ENCODE measurements at regions of chr17 and their contacts with region 1.

Region 1: DNA sequence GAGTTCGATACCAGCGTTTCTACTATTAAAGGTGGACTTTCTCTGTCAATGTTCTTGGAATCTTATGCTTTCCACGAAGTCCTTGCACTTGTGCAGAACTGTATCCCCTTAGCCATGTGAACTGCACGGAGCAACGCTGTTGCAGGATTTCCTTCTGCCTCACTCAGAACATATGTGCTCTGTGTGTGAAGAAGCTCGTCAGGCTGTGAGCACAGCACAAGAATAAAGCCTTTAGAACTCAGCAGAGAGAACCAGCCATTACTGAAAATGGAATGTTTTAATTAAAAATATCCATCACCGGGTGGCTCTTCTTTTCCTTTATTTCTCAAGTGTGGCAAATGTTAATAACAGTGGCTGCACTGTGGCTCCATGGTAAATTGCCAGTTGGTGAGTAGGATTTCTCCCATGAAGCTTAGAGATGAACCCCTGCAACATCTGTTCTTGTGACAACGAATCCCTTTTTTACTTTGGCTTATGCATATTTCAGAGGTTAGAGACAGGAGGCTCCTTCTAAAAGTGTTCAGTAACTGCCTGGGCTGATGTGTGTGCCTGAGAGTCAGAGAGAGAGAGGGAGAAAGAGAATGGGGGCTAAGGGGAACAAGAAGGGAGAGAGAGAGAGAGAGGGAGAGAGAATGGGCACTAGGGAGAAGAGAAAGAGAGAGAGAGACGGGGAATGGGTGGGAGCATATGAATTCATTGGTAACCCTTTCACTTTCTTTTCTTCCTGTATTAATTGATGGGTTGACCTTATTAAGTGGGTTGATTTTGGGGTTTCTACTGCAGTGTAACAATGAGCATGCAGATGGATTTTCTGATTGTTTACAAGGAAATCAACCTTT is 50.0 kb downstream of the RPTOR start:
- DNase-seq: no peak
- CTCF ChIP-seq: no peak

Region 2: GRCh38 chr17:80498242-80498919 is 96.3 kb before region 1 on chr17:
- CTCF ChIA-PET with region 1: no interaction called
- POLR2A ChIA-PET with region 1: no interaction called
- DNase-seq: no peak
- CTCF ChIP-seq: no peak

Region 3: DNA sequence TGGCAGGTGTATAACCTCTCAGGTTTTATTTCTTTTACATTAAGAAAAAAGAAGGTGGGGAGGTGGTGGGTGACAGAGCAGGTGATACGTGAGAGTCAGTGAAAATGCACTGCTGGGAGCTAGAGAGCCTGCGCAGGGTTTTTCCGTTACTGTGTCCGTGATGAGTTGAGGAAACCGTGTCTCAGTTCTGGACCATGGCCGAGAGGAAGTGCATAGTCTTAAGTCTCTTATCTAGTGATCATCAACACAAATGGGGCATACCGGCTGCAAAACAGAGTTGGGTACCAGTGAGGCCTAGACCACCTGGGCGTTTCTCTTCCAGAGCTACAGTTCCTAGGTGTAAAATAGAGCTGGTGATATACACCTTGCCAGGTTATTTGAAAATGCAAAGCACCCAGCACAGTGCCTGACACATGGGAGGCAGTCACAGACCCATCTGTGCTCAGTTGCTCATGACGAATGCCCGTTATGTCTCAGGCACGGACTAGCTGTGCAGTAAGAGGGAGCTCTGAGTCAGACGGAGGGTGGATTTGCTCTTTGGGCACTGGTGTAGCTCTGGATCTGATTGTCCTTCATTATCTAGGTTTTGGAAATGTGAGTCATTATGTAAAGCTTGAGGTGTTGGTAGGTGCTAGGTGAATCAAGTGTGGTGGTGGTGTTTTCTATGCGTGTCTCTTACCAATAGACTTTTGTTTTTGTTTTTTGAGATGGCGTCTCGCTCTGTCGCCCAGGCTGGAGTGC is 10.8 kb after region 1 on chr17:
- CTCF ChIA-PET with region 1: interaction called, 11 read pairs
- POLR2A ChIA-PET with region 1: no interaction called
- DNase-seq: peak; percentile 82
- CTCF ChIP-seq: no peak